OCI-LY7 (cell line): ENCODE measurements at regions of chr13 and their contacts with region 1.

Region 1: GRCh38 chr13:40922437-40923040 is 96.6 kb downstream of the ELF1 start:
- DNase-seq: no peak
- H3K4me3 ChIP-seq: no peak overlapping the region
- H3K27ac ChIP-seq: no peak overlapping the region
- H3K4me1 ChIP-seq: peaks cover 8% of the 10 kb centered on the region
- CTCF ChIP-seq: no peak

Region 2: GRCh38 chr13:40692946-40693345 is 229.6 kb before region 1 on chr13:
- CTCF ChIA-PET with region 1: interaction called, 3 read pairs
- POLR2A ChIA-PET with region 1: no interaction called
- intact Hi-C with region 1: loop called (anchors 10 kb)
- DNase-seq: no peak
- H3K4me3 ChIP-seq: no peak overlapping the region
- H3K27ac ChIP-seq: peak overlapping the region; percentile 64
- H3K4me1 ChIP-seq: peaks cover 66% of the 10 kb centered on the region
- CTCF ChIP-seq: no peak

Region 3: DNA sequence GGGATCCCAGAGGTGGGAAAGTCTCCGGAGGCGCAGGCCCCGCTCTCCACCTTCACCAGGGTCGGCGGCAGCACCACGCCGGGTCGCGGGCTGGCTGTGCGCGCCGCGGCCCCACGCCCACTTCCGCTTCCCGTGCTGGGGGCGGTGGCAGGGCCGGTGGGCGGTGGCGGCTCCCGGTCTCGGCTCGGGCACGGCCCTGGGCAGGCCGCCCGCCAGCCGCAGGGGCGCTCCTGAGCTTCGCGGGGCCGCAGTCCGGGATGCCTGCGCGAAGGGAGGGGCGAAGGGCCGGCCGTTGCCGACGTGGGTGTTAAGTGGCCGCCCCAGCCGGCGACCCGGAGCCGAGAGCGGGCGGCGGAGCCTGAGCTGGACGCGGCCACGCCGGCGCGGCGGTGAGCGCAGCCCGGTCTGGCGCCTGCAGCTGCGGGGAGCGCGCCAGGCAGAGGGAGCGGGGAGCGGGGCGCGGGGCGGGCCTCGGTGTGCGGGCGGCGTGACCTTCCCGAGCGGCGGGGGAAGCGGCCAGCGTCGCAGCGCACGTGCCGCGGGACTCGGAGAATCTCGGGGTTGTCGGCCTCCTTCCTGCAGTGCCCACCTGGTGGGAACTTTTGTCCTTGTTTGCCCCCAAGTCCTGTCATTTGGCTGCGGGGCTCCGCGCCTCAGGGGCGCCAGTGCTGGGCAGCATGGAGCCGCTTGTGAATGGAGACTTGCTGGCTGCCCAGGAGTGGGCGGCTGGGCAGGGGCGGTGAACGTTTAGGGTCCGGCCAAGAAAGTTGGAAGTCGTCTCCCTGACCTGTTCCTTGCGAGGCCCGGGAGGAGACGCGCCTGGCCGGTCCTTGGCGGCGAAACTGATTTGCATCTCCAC is 133.0 kb before region 1 on chr13 and contains the start of gene SLC25A15:
- CTCF ChIA-PET with region 1: no interaction called
- POLR2A ChIA-PET with region 1: no interaction called
- intact Hi-C with region 1: loop called (anchors 1 kb)
- DNase-seq: peak; percentile 89
- H3K4me3 ChIP-seq: peak within 1 kb of the TSS; percentile 72
- H3K27ac ChIP-seq: peak within 1 kb of the TSS; percentile 92
- H3K4me1 ChIP-seq: peaks cover 46% of the 10 kb centered on the region
- CTCF ChIP-seq: peak; percentile 47
- total RNA-seq, gene SLC25A15: 61.3 and 71.0 TPM in 2 replicates

Region 4: DNA sequence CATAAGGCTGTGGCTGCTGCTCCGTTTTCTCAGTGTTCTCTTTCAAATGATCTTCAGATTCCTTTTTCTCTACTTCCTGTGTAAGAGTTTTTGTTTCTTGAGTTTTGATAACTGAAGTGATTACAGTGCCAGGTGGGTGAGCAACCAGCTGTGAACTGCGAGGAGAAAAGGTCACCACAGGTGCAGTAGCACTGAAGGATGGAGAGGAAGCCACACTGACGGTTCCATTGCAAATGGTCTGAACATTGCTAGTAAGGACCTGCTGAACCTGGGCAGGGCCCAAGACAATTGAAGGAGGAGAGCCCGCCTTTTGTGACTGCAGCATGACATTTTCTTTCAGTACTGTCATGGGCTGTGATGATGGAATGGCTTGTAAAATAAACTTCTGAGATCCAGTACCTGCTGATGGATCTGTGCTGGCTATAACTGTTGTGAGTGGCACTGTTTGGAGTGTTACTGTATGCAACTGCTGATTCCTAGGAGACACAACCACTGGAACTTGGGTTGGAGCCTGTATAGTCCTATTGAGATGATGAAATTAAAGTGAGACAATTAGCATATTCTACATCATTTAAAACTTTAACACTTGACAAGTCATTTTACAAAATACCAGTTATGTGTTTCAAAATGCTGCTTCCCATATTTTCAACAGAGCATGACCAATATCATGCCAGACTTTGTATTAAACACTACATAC is 11.1 kb after region 1 on chr13:
- CTCF ChIA-PET with region 1: interaction called, 3 read pairs
- POLR2A ChIA-PET with region 1: interaction called, 11 read pairs
- intact Hi-C with region 1: no loop called
- DNase-seq: peak; percentile 97
- H3K4me3 ChIP-seq: peak overlapping the region; percentile 52
- H3K27ac ChIP-seq: peak overlapping the region; percentile 95
- H3K4me1 ChIP-seq: peaks cover 58% of the 10 kb centered on the region
- CTCF ChIP-seq: no peak

Region 5: DNA sequence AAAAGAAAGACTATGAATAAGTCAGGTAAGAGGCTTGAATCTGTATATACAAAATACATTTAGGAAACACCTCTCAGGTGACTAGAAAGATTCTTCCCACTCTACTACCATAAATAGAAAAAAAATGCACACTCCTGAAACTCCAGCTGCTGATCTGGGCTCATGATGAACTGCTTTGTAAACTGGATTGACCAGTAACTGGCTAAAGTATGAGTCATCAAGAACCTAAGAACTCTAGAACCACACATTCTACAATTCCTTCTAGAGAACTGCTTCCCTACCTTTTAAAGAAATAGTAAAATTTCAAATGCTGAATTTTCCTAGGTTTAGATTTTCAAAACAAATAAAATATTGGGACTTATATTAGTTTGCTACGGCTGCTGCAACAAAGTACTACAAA is 41.4 kb after region 1 on chr13:
- CTCF ChIA-PET with region 1: interaction called, 13 read pairs
- POLR2A ChIA-PET with region 1: interaction called, 3 read pairs
- intact Hi-C with region 1: no loop called
- DNase-seq: no peak
- H3K4me3 ChIP-seq: no peak overlapping the region
- H3K27ac ChIP-seq: peak overlapping the region; percentile 24
- H3K4me1 ChIP-seq: peaks cover 85% of the 10 kb centered on the region
- CTCF ChIP-seq: no peak

Region 6: GRCh38 chr13:41132512-41133152 is 210.1 kb after region 1 on chr13 and contains the start of gene KBTBD6:
- CTCF ChIA-PET with region 1: no interaction called
- POLR2A ChIA-PET with region 1: no interaction called
- intact Hi-C with region 1: no loop called
- DNase-seq: peak; percentile 97
- H3K4me3 ChIP-seq: peak within 1 kb of the TSS; percentile 84
- H3K27ac ChIP-seq: peak within 1 kb of the TSS; percentile 36
- H3K4me1 ChIP-seq: peaks cover 39% of the 10 kb centered on the region
- CTCF ChIP-seq: no peak
- total RNA-seq, gene KBTBD6: 11.1 and 11.6 TPM in 2 replicates